Activated CD8-positive, alpha-beta T cell treated with anti-CD3 and anti-CD28 coated beads for 36 hours (primary cell): ENCODE measurements at regions of chr17 and their contacts with region 1.

Region 1: DNA sequence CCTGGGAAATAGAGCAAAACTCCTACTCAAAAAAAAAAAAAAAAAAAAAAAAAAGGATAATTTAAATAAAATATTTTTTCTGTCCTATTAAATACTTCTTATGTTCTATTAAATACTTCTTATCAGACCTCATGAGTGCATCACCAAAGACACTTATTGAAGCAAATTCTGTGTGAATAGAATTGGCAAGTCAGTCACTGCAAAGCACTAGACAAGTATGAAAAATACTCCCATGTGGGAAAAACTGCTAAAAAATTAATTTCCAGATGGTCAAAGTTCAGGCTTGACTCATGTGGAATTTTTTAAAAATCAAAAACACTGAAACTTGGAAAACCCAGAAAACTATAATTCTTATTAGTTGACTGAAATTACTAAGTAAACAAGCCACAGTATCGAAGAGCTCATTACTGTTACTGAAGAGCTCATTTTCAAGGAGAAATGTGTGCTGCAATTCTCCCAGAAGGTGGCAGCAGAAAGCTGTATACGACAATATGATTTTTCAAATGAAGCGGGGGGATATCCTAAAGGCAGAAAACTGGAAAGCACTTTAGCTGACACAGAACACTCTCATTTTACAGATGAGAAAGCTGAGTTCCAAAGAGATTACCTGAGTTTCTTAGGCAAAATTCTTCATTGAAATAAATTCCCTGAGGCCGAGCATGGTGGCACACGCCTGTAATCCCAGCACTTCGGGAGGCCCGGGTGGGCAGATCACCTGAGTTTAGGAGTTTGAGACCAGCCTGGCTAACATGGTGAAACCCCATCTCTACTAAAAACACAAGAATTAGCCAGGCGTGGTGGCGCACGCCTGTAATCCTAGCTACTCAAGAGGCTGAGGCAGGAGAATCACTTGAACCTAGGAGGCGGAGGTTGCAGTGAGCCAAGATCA is 15.9 kb upstream of the FBXO47 start:
- DNase-seq: peak; percentile 68
- ATAC-seq: peak; percentile 78
- H3K4me3 Mint-ChIP-seq: no peak overlapping the region
- H3K27ac Mint-ChIP-seq: no peak overlapping the region
- H3K4me1 Mint-ChIP-seq: no peaks in the 10 kb centered on the region
- H3K27me3 Mint-ChIP-seq: no peaks in the 10 kb centered on the region
- CTCF ChIP-seq: peak; percentile 91

Region 2: GRCh38 chr17:38967290-38967738 is 15.8 kb before region 1 on chr17 and contains the start of gene FBXO47:
- CTCF ChIA-PET with region 1: interaction called, 24 read pairs
- POLR2A ChIA-PET with region 1: no interaction called
- intact Hi-C with region 1: no loop called
- DNase-seq: peak; percentile 95
- ATAC-seq: peak; percentile 97
- H3K4me3 Mint-ChIP-seq: peak within 1 kb of the TSS; percentile 74
- H3K27ac Mint-ChIP-seq: peak within 1 kb of the TSS; percentile 83
- H3K4me1 Mint-ChIP-seq: peaks cover 18% of the 10 kb centered on the region
- H3K27me3 Mint-ChIP-seq: no peaks in the 10 kb centered on the region
- CTCF ChIP-seq: no peak
- total RNA-seq, gene FBXO47: not detected

Region 3: GRCh38 chr17:39045948-39046679 is 63.0 kb after region 1 on chr17:
- CTCF ChIA-PET with region 1: interaction called, 11 read pairs
- POLR2A ChIA-PET with region 1: no interaction called
- intact Hi-C with region 1: no loop called
- DNase-seq: no peak
- ATAC-seq: no peak
- H3K4me3 Mint-ChIP-seq: no peak overlapping the region
- H3K27ac Mint-ChIP-seq: peak overlapping the region; percentile 76
- H3K4me1 Mint-ChIP-seq: no peaks in the 10 kb centered on the region
- H3K27me3 Mint-ChIP-seq: peaks cover under 1% of the 10 kb centered on the region
- CTCF ChIP-seq: no peak

Region 4: DNA sequence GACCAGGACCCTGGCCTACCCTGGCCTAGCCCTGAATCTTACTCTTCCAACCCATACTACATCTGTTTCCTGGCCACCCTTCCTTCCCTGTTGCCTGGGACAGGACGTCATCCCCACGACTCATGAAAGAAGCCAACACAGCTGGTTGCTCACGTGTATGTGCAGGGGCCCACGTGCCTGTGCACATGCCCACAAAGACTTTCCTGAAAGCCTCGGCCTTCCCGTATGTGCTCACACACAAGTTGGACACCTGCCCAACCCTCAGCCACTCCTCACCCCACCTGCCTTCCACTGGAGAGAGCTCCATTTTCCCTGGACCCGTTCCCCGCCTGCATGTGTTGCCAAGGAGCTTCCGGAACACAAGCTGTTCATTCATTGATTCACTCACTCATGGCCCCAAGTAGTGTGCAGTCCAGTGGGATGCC is 161.3 kb after region 1 on chr17:
- CTCF ChIA-PET with region 1: interaction called, 155 read pairs
- POLR2A ChIA-PET with region 1: no interaction called
- intact Hi-C with region 1: no loop called
- DNase-seq: no peak
- ATAC-seq: no peak
- H3K4me3 Mint-ChIP-seq: no peak overlapping the region
- H3K27ac Mint-ChIP-seq: no peak overlapping the region
- H3K4me1 Mint-ChIP-seq: peaks cover 19% of the 10 kb centered on the region
- H3K27me3 Mint-ChIP-seq: no peaks in the 10 kb centered on the region
- CTCF ChIP-seq: no peak

Region 5: DNA sequence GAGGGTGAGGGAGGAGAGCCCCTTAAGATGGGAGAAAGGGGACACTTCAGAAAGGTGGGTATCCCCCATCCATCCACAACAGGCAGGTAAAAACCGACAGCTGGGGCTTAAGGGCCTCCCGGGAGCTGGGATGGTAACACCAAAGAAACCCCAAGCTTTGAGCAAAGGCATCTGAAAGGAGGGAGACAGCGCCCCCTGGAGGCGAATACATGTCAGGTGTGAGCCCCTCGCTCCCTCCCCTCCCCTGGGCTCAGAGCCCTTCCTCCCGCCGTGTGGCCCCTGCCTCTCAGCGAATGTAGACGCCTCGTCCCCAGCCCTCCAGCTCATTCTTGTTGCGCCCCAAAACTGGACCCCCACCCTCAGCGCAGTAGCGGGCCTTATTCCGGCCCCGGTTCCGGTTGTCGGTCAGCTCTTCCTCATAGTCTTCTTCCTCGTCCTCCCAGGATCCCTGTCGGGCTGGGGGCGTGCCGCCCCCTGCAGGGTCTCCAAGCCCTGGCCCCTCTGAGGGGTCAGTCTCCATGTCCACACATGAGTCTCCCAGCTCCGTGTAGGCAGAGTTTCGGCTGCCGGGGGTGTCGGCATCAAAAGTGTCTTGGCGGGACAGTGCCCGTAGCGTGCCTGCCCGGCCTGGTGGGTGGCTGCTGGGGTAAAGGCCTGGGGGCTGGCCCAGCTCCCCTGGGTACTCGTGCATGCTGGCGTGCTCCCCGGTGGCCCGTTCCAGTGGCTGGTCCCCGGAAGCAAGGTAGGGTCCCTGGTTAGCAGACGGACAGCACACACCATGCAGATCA is 192.0 kb after region 1 on chr17:
- CTCF ChIA-PET with region 1: interaction called, 66 read pairs
- POLR2A ChIA-PET with region 1: interaction called, 4 read pairs
- intact Hi-C with region 1: no loop called
- DNase-seq: peak; percentile 92
- ATAC-seq: peak; percentile 84
- H3K4me3 Mint-ChIP-seq: no peak overlapping the region
- H3K27ac Mint-ChIP-seq: no peak overlapping the region
- H3K4me1 Mint-ChIP-seq: peaks cover 10% of the 10 kb centered on the region
- H3K27me3 Mint-ChIP-seq: no peaks in the 10 kb centered on the region
- CTCF ChIP-seq: peak; percentile 91